Motor neuron (in vitro differentiated cells): ENCODE measurements at regions of chr15 and their contacts with region 1.

Region 1: GRCh38 chr15:20272422-20273184 is 269.0 kb downstream of the GOLGA6L6 start:
- ATAC-seq: no peak
- H3K4me3 ChIP-seq: no peak overlapping the region
- H3K27ac ChIP-seq: no peak overlapping the region
- H3K4me1 ChIP-seq: no peaks in the 10 kb centered on the region

Region 2: GRCh38 chr15:20106026-20106425 is 166.6 kb before region 1 on chr15:
- in situ Hi-C with region 1: no loop called
- ATAC-seq: no peak
- H3K4me3 ChIP-seq: no peak overlapping the region
- H3K27ac ChIP-seq: no peak overlapping the region
- H3K4me1 ChIP-seq: no peaks in the 10 kb centered on the region

Region 3: DNA sequence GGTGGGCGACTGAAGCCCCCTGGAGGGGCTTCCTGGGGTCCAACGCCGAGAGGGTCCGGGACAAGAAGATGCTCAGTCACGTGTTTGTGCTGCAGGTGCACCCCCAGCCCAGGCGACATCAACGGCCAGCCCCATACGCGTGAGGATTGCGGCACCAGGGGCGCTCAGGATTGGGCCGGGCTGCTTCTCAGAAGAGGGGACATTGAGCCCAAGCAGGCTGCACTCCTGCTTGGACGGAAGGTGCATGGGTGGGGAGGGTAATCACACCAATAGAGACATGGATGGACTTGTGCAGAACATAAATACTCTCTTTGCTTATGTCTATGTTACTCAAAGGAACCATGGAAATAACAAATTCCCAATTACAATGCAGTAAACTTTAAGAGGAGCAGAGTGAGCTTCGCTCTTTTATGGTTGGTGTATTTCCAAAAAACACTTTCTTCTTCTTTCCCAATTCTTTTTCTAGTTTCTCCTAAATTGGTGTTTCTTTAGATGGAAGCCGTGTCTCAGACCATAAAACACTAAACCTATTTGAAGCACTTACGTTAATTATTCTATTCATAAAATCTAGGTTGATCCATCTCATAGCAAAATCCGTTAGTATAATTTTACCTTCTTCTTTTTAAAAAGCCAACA is 86.3 kb after region 1 on chr15:
- in situ Hi-C with region 1: no loop called
- ATAC-seq: no peak
- H3K4me3 ChIP-seq: no peak overlapping the region
- H3K27ac ChIP-seq: no peak overlapping the region
- H3K4me1 ChIP-seq: no peaks in the 10 kb centered on the region

Region 4: GRCh38 chr15:20368974-20369373 is 96.4 kb after region 1 on chr15:
- in situ Hi-C with region 1: no loop called
- ATAC-seq: no peak
- H3K4me3 ChIP-seq: no peak overlapping the region
- H3K27ac ChIP-seq: no peak overlapping the region
- H3K4me1 ChIP-seq: no peaks in the 10 kb centered on the region

Region 5: GRCh38 chr15:20386198-20386597 is 113.6 kb after region 1 on chr15:
- in situ Hi-C with region 1: loop called in 1 of 9 experiments (anchors 25 kb)
- ATAC-seq: no peak
- H3K4me3 ChIP-seq: no peak overlapping the region
- H3K27ac ChIP-seq: no peak overlapping the region
- H3K4me1 ChIP-seq: no peaks in the 10 kb centered on the region

Region 6: GRCh38 chr15:20409247-20409646 is 136.6 kb after region 1 on chr15:
- in situ Hi-C with region 1: no loop called
- ATAC-seq: no peak
- H3K4me3 ChIP-seq: no peak overlapping the region
- H3K27ac ChIP-seq: no peak overlapping the region
- H3K4me1 ChIP-seq: no peaks in the 10 kb centered on the region